ENCODE measurements at regions of chr4 and their contacts with region 1.

Region 1: DNA sequence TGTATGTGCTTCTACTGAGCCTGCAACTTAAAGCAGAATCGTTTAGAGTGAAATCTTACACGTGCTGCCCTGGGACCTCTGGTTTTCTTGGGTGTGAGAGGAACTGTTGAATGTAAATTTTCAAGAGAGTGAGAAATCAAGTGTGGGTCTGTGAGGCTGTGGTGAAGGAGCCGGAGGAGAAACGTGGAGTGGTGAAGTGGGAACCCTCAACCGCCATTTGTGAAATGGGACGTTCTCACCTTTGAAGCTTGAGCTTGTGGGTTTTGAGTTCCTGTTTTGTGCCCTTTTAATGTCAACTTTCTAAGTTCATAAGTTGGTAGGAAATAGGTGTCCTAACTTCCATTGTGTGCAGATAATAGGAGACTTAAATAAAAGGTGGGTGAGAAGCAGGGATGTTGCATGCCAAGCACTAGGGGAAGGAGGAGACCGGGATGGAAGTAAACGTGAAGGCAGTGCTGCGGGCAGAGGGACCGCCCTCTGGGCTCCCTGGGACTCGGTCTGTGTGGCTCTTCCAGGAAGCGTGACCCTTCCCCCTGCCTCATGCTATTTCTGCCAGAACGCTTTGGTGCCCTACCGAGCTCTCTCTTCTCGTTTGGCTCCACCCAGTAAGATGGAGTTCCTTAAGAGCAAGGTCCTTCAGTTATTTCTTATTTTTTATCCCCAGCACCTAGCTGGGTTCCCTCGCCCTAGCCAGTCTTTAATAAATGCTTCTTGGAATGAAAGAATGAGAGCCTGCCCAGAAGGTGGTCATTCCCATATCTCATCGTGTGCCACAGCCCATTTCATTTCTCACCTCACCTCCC is 56.0 kb downstream of the TMEM131L start:
- DNase-seq: no peak
- H3K4me3 ChIP-seq: no peak overlapping the region
- H3K4me3 Mint-ChIP-seq: no peak overlapping the region
- H3K27ac Mint-ChIP-seq: peak overlapping the region; percentile 34
- H3K4me1 ChIP-seq: peaks cover 71% of the 10 kb centered on the region
- H3K4me1 Mint-ChIP-seq: peaks cover 53% of the 10 kb centered on the region
- H3K27me3 ChIP-seq: no peaks in the 10 kb centered on the region
- H3K27me3 Mint-ChIP-seq: no peaks in the 10 kb centered on the region
- CTCF ChIP-seq: no peak

Region 2: GRCh38 chr4:153486281-153487151 is 35.7 kb before region 1 on chr4:
- CTCF ChIA-PET with region 1: interaction called, 5 read pairs
- POLR2A ChIA-PET with region 1: interaction called, 3 read pairs
- intact Hi-C with region 1: loop called (anchors 1 kb)
- DNase-seq: peak; percentile 71 to 77
- H3K4me3 ChIP-seq: no peak overlapping the region
- H3K4me3 Mint-ChIP-seq: peak overlapping the region; percentile 47
- H3K27ac Mint-ChIP-seq: peak overlapping the region; percentile 73
- H3K4me1 ChIP-seq: peaks cover 32% of the 10 kb centered on the region
- H3K4me1 Mint-ChIP-seq: peaks cover 25% of the 10 kb centered on the region
- H3K27me3 ChIP-seq: no peaks in the 10 kb centered on the region
- H3K27me3 Mint-ChIP-seq: no peaks in the 10 kb centered on the region
- CTCF ChIP-seq: no peak

Region 3: DNA sequence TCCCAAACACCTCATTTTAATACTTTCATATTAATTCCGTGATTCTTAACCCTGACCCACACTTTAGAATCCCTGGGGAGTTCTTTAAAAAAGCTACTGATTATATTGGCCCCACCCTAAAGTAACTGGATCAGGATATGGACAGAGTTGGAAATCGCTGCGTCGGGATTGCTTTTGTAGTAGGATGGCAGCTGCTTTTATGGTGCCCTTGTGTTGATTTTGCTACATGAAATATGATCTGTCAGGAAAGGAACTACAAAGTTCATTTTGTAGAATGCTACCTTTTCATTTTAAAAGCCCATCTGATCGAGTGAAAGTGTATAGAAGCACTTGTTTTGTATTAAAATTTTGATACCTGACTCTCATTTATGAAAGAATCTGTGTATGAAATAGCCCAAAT is 12.5 kb before region 1 on chr4:
- CTCF ChIA-PET with region 1: no interaction called
- POLR2A ChIA-PET with region 1: no interaction called
- intact Hi-C with region 1: loop called (anchors 1 kb)
- DNase-seq: peak in 1 of 2 experiments; percentile 52
- H3K4me3 ChIP-seq: no peak overlapping the region
- H3K4me3 Mint-ChIP-seq: peak overlapping the region; percentile 40
- H3K27ac Mint-ChIP-seq: peak overlapping the region; percentile 56
- H3K4me1 ChIP-seq: peaks cover 84% of the 10 kb centered on the region
- H3K4me1 Mint-ChIP-seq: peaks cover 37% of the 10 kb centered on the region
- H3K27me3 ChIP-seq: no peaks in the 10 kb centered on the region
- H3K27me3 Mint-ChIP-seq: no peaks in the 10 kb centered on the region
- CTCF ChIP-seq: no peak

Region 4: DNA sequence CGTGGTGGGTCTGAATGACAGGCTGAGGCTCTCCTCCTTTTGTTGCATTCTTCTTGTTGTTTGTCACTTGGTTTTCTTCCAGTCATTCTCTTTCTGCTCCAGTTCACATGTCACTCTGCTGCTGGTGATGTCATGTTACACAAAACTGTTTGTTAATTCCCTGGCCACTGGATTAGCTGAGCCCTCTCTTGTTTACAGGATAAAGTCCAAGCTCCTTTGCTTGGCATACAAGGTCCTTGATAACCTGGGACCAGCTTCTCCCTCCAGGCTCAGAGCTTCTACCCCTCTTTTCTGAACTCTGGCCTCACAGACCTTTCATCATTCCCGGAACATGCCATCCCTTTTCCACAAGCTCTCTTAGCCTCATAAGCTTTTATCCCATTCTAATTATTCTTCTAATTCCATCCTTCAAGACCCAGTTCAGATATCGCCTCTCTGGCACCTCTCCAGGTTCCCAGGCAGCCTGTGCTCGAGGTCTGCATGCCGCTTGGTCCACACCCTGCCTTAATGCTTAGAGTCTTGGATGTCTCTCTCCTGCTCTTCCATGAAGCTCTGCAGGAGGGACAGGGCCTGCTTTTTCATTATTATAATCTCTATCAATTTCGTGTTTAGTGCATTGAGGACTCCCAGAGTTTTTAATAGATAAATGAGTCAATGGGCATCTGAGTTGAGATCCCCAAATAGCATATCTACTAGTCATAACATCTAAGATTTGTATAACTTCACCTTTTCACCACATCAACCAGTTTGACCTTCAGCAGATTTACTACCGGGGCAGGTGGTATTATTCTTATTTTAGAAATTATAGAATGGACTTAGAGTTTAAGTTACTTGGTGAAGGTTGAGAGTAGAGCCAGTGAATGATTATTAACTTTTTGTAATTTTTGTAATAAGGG is 42.7 kb after region 1 on chr4:
- CTCF ChIA-PET with region 1: no interaction called
- POLR2A ChIA-PET with region 1: no interaction called
- intact Hi-C with region 1: loop called (anchors 1 kb)
- DNase-seq: peak; percentile 73
- H3K4me3 ChIP-seq: no peak overlapping the region
- H3K4me3 Mint-ChIP-seq: peak overlapping the region; percentile 41
- H3K27ac Mint-ChIP-seq: peak overlapping the region; percentile 58
- H3K4me1 ChIP-seq: peaks cover 49% of the 10 kb centered on the region
- H3K4me1 Mint-ChIP-seq: peaks cover 15% of the 10 kb centered on the region
- H3K27me3 ChIP-seq: no peaks in the 10 kb centered on the region
- H3K27me3 Mint-ChIP-seq: no peaks in the 10 kb centered on the region
- CTCF ChIP-seq: no peak

Region 5: DNA sequence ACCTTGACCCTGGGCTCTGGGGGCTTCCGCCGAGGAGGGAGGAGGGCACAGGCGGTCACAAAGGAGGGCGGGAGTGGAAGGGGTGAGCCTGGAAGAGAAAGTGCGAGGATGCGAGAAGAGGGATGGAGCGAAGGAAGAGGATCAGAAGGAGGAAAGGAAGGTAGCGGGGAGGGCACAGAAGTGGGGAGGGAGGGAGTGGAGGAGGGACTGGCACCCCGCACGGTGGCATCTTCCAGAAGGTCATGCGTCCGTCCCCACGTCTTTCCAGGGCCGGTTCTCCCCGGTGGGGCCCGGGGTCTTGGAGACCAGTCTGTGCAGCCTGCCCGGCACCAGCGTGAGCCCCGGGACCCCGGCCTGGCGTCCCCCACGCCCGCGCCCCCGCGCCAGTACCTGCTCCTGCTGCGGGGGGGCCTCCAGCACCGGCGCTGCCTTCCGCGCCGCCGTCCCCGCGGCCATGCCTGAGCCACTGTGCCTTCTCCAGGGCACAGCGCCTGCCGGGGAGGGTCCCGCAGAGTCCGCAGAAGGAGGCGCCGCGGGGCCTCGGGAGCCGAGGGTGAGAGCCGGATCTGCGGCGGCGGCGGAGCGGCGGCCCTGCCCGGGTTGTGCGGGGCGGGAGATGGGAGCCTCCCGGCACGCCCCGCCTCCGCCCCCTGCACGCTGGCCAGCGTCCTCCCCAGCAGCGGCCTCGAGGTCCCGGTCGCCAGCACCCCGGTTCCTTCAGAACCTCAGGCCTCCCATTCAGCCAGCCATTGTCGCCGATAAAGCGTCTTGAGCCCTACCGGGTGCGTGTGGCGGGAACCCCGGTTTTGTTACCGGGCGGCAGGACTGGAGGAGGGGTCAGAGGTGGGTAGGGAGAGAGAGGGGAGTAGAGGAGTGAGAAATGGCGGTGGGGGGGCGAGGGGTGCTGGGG is 237.5 kb after region 1 on chr4 and contains the start of gene RNF175:
- CTCF ChIA-PET with region 1: no interaction called
- POLR2A ChIA-PET with region 1: no interaction called
- intact Hi-C with region 1: no loop called
- DNase-seq: no peak
- H3K4me3 ChIP-seq: no peak within 1 kb of the TSS
- H3K4me3 Mint-ChIP-seq: no peak within 1 kb of the TSS
- H3K27ac Mint-ChIP-seq: no peak within 1 kb of the TSS
- H3K4me1 ChIP-seq: peaks cover 4% of the 10 kb centered on the region
- H3K4me1 Mint-ChIP-seq: no peaks in the 10 kb centered on the region
- H3K27me3 ChIP-seq: no peaks in the 10 kb centered on the region
- H3K27me3 Mint-ChIP-seq: no peaks in the 10 kb centered on the region
- CTCF ChIP-seq: no peak
- total RNA-seq, gene RNF175: not detected in 2 replicates